Activated CD8-positive, alpha-beta T cell treated with anti-CD3 and anti-CD28 coated beads for 36 hours (primary cell): ENCODE measurements at regions of chr1 and their contacts with region 1.

Region 1: GRCh38 chr1:2194898-2195673 is 514 bp upstream of the FAAP20 start:
- DNase-seq: peak; percentile 93
- ATAC-seq: peak; percentile 69
- H3K4me3 Mint-ChIP-seq: peak overlapping the region; percentile 83
- H3K27ac Mint-ChIP-seq: peak overlapping the region; percentile 96
- H3K4me1 Mint-ChIP-seq: peaks cover 33% of the 10 kb centered on the region
- H3K27me3 Mint-ChIP-seq: no peaks in the 10 kb centered on the region
- CTCF ChIP-seq: peak; percentile 97

Region 2: DNA sequence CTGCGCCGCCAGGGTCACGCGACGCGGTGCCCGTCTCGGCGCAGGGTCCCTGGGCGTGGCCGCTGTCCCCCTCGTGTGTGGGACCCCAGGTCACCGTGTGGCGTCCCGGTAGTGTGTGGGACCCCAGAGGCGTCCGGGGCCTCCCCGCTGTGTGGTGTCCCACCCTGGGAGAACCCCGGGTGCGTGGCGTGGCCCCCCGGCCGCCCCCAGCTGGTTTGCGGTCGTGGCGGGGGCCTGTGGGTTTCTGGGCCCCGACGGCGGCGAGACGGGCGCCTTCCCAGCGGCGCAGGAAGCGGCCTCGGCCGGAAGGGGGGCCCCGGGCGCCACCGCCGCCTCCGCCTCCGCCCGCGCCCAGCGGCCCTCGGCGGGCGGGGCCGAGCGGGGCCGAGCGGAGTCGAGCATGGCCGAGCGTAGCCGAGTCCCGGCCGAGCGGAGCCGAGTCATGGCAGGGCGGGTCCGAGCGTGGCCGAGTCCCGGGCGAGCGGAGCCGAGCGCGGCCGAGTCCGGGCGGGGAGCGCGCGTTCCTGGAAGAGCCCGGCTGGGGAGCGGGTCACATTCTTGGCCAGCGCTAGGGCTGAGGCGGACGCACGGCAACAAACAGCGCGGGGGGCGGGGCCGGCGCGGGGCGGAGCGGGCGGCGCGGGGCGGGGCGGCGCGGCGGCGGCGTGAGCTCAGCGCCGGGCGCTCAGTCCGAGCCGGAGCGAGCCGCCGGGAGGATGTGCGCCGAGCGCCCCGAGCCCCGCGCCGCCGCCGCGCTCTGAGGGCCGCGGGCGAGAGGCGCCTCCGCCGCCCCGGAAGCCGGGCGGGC is 32.5 kb after region 1 on chr1:
- CTCF ChIA-PET with region 1: interaction called, 21 read pairs
- POLR2A ChIA-PET with region 1: interaction called, 19 read pairs
- intact Hi-C with region 1: no loop called
- DNase-seq: peak; percentile 95
- ATAC-seq: peak; percentile 93
- H3K4me3 Mint-ChIP-seq: peak overlapping the region; percentile 54
- H3K27ac Mint-ChIP-seq: peak overlapping the region; percentile 57
- H3K4me1 Mint-ChIP-seq: peaks cover 12% of the 10 kb centered on the region
- H3K27me3 Mint-ChIP-seq: peaks cover 1% of the 10 kb centered on the region
- CTCF ChIP-seq: no peak

Region 3: GRCh38 chr1:2300851-2301606 is 105.9 kb after region 1 on chr1:
- CTCF ChIA-PET with region 1: interaction called, 15 read pairs
- POLR2A ChIA-PET with region 1: no interaction called
- intact Hi-C with region 1: no loop called
- DNase-seq: peak; percentile 98
- ATAC-seq: peak; percentile 83
- H3K4me3 Mint-ChIP-seq: peak overlapping the region; percentile 81
- H3K27ac Mint-ChIP-seq: peak overlapping the region; percentile 99
- H3K4me1 Mint-ChIP-seq: peaks cover 55% of the 10 kb centered on the region
- H3K27me3 Mint-ChIP-seq: no peaks in the 10 kb centered on the region
- CTCF ChIP-seq: no peak

Region 4: GRCh38 chr1:2381741-2382620 is 186.9 kb after region 1 on chr1:
- CTCF ChIA-PET with region 1: interaction called, 239 read pairs
- POLR2A ChIA-PET with region 1: interaction called, 13 read pairs
- intact Hi-C with region 1: loop called (anchors 5 kb)
- DNase-seq: peak; percentile 81
- ATAC-seq: peak; percentile 99
- H3K4me3 Mint-ChIP-seq: no peak overlapping the region
- H3K27ac Mint-ChIP-seq: no peak overlapping the region
- H3K4me1 Mint-ChIP-seq: no peaks in the 10 kb centered on the region
- H3K27me3 Mint-ChIP-seq: no peaks in the 10 kb centered on the region
- CTCF ChIP-seq: peak; percentile 94

Region 5: GRCh38 chr1:2575801-2576663 is 380.9 kb after region 1 on chr1:
- CTCF ChIA-PET with region 1: no interaction called
- POLR2A ChIA-PET with region 1: no interaction called
- intact Hi-C with region 1: loop called (anchors 5 kb)
- DNase-seq: no peak
- ATAC-seq: no peak
- H3K4me3 Mint-ChIP-seq: peak overlapping the region; percentile 19
- H3K27ac Mint-ChIP-seq: peak overlapping the region; percentile 95
- H3K4me1 Mint-ChIP-seq: peaks cover 54% of the 10 kb centered on the region
- H3K27me3 Mint-ChIP-seq: no peaks in the 10 kb centered on the region
- CTCF ChIP-seq: no peak